Spleen (tissue), 13 donors: ENCODE measurements at regions of chr1 and their contacts with region 1.

Region 1: GRCh38 chr1:180863158-180863775 is 49.4 kb upstream of the KIAA1614 start:
- DNase-seq: no peak
- H3K4me3 ChIP-seq: no peak overlapping the region
- H3K27ac ChIP-seq: no peak overlapping the region
- H3K4me1 ChIP-seq: peaks cover 0 to 8% (median 2%) of the 10 kb centered on the region in 6 donors
- H3K27me3 ChIP-seq: no peaks in the 10 kb centered on the region
- CTCF ChIP-seq: peak; percentile 29 to 83 (median 74)
- POLR2A ChIP-seq: no peak

Region 2: GRCh38 chr1:180515864-180516388 is 347.3 kb before region 1 on chr1:
- intact Hi-C with region 1: loop called (anchors 5 kb)
- DNase-seq: no peak
- H3K4me3 ChIP-seq: no peak overlapping the region
- H3K27ac ChIP-seq: no peak overlapping the region
- H3K4me1 ChIP-seq: peaks cover 0 to 16% (median 6%) of the 10 kb centered on the region in 6 donors
- H3K27me3 ChIP-seq: peaks cover 0 to 10% (median 0%) of the 10 kb centered on the region in 7 donors
- CTCF ChIP-seq: peak; percentile 57 to 90 (median 82)
- POLR2A ChIP-seq: no peak

Region 3: DNA sequence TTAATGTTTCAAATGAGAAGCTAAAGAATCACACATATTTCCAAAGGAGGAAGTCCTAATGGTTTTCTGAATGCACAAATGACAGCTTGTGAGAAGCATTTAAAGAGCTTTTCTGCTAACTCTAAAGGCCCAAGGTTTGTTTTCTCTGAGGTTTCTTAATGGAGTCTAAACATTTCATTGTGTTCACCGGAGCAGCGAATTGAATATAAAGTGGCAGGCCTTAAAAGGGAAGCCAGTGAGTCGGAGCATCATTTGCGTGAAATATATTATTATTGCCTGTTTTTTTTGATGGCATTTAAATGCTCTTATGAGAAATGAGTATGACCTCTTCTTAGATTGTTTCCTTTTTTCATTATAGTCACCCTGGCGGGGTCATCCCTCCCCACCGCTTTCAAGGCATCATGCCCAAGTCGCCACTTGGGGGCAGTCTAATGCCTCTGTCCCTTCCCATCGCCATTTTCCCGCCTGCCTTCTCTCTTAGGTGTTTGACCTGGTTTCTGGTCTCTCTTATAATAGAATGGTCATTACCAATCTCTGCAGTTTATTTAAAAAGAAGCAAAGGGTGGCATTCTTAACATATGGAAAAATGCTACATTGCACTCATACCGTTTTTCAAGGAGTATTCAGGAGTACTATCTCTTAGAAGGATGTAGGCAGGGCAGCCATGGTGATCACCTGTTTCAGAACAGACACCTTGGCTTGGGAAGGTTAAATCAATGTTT is 329.8 kb before region 1 on chr1:
- intact Hi-C with region 1: loop called (anchors 5 kb)
- DNase-seq: peak; percentile 84
- H3K4me3 ChIP-seq: no peak overlapping the region
- H3K27ac ChIP-seq: no peak overlapping the region
- H3K4me1 ChIP-seq: peaks cover 0 to 17% (median 6%) of the 10 kb centered on the region in 6 donors
- H3K27me3 ChIP-seq: peaks cover 0 to 7% (median 0%) of the 10 kb centered on the region in 7 donors
- CTCF ChIP-seq: peak; percentile 55 to 89 (median 80)
- POLR2A ChIP-seq: no peak

Region 4: DNA sequence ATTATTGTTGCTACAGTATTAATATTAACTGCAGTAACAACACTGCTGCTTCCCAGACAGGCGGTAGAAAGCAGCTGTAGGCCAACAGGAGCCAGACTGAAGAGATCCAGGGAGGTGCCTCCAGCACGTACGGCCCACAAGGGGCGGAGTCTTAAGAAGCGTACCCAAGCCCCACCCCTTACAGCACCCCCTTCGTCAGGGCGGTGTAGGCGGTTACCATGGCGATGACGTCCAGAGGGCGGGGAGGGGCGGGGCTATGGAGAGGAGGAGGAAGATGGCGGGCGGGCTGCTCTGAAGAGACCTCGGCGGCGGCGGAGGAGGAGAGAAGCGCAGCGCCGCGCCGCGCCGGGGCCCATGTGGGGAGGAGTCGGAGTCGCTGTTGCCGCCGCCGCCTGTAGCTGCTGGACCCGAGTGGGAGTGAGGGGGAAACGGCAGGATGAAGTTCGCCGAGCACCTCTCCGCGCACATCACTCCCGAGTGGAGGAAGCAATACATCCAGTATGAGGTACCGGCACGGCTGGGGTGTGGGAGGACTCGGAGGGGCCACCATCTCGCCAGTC is 231.4 kb before region 1 on chr1 and contains the start of gene XPR1:
- intact Hi-C with region 1: loop called (anchors 10 kb)
- DNase-seq: peak; percentile 99
- H3K4me3 ChIP-seq: peak within 1 kb of the TSS; percentile 71 to 97 (median 92)
- H3K27ac ChIP-seq: peak within 1 kb of the TSS; percentile 69 to 97 (median 94)
- H3K4me1 ChIP-seq: peaks cover 18 to 53% (median 38%) of the 10 kb centered on the region in 6 donors
- H3K27me3 ChIP-seq: no peaks in the 10 kb centered on the region
- CTCF ChIP-seq: peak in 8 of 11 experiments; percentile 23 to 59 (median 45)
- POLR2A ChIP-seq: peak in 2 of 3 donors; percentile 77 to 91
- total RNA-seq, gene XPR1: 12.5 to 26.8 (median 22.5) TPM